ENCODE measurements at regions of chr2 and their contacts with region 1.

Region 1: DNA sequence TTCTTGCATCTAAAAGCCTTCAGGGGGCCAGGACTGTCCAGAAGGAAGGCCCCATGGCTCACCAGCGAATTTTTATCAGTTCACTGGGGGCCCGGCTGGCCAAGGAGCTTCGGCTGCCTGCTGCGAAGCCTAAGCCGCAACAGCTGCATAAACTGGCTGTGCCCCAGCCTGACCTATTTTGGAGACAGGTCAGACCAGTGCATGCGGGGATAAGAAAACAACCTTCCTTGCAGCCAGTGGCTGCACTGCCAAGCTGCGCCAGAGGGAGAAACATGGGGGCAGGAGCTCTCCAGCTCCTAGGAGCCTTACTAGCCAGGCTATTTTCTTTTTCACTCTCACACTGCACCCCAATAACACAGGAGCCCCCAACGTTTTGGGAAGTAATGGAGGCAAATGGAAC is 15.2 kb downstream of the PAX3 start:
- DNase-seq: no peak
- H3K4me3 ChIP-seq: no peak overlapping the region
- H3K27ac ChIP-seq: no peak overlapping the region
- H3K4me1 ChIP-seq: no peaks in the 10 kb centered on the region
- H3K27me3 ChIP-seq: peaks cover 76% of the 10 kb centered on the region
- CTCF ChIP-seq: no peak

Region 2: DNA sequence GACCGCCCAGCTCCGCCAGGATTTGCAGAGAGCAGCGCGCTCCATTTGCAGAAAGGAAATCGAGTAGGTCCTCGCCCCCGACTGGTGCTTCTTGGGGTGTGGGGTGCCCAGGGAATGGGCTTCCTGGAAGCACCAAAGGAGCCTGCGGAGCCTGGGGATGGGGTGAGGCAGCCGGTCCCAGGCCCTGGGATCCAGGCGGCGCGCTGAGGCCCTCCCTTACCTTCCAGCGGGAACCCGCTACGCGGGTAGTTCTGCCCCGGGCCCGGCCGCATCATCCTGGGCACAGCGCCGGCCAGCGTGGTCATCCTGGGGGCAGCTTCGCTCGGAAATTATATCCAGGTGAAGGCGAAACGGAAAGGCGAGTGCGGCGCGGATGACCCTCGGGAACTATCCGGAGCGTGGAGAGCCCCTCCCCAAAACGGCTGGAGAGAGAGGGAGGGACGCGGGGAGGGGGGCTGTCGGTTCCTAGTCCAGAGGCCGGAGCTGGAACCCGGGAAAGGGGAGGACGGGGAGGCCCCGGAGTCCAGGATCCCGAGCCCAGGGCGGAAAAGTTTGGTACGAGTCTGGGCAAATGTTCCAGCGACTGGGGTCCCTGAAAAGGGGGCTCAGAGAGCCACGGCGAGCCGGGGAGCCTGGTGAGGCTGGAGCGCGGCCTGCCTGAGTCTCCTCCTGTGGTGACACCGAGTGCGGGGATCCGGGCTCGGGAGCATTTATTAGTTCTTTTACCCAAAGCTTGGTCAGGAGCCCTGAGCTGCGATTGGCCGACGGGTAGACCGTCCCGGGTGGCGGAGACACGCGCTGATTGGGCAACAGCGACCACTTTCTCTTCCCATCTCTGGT is 14.9 kb after region 1 on chr2 and contains the start of gene PAX3:
- CTCF ChIA-PET with region 1: no interaction called
- POLR2A ChIA-PET with region 1: no interaction called
- intact Hi-C with region 1: no loop called
- DNase-seq: no peak
- H3K4me3 ChIP-seq: no peak within 1 kb of the TSS
- H3K27ac ChIP-seq: no peak within 1 kb of the TSS
- H3K4me1 ChIP-seq: no peaks in the 10 kb centered on the region
- H3K27me3 ChIP-seq: peaks cover 82% of the 10 kb centered on the region
- CTCF ChIP-seq: no peak
- total RNA-seq, gene PAX3: not detected in 2 replicates

Region 3: DNA sequence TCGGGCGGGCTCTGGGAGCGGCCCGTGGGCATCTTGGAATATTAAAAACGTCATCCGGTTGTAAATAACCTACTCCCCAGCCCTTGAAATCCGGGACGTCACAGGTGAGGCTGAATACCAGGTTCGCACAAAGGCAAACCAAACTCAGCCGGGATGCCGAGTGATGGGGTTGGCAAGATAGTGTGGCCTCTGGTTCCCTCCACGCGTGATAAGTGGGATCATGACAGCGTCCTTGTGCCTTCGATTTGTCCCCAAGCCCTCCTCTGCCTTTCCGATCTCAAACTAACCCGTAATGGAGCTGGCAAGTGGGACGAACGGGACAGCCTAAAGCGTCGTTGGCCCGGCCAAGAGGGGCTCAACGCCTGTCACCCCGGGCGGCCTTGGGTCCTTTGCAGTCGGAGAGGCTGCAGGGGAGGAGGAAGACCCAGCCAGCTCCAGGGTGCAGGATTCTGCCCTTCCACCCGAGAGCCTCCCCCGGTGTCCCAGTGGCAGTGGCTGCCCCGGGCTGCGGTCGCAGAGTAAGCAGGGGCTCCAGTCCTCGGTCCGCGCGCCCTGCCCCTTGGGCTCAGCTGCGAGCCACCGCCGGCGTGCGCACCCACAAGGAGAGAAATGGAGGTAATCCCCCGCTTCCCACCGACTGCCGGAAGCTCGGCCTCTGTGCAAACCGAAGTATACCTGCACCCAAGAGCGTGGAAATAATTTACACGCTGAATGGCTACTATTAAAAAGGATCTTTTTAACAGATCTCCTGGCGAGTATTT is 28.5 kb after region 1 on chr2:
- CTCF ChIA-PET with region 1: no interaction called
- POLR2A ChIA-PET with region 1: no interaction called
- intact Hi-C with region 1: loop called (anchors 2 kb)
- DNase-seq: no peak
- H3K4me3 ChIP-seq: no peak overlapping the region
- H3K27ac ChIP-seq: no peak overlapping the region
- H3K4me1 ChIP-seq: no peaks in the 10 kb centered on the region
- H3K27me3 ChIP-seq: peaks cover 35% of the 10 kb centered on the region
- CTCF ChIP-seq: no peak

Region 4: GRCh38 chr2:222504719-222505118 is 221.1 kb after region 1 on chr2:
- CTCF ChIA-PET with region 1: no interaction called
- POLR2A ChIA-PET with region 1: no interaction called
- intact Hi-C with region 1: no loop called
- DNase-seq: no peak
- H3K4me3 ChIP-seq: no peak overlapping the region
- H3K27ac ChIP-seq: no peak overlapping the region
- H3K4me1 ChIP-seq: peaks cover 12% of the 10 kb centered on the region
- H3K27me3 ChIP-seq: no peaks in the 10 kb centered on the region
- CTCF ChIP-seq: no peak

Measured in PC-9 (cell line).